ENCODE measurements at regions of chr10 and their contacts with region 1.

Region 1: GRCh38 chr10:95601116-95601719 is 40.0 kb upstream of the SORBS1 start:
- DNase-seq: peak; percentile 80 to 92 (median 82)
- H3K4me3 ChIP-seq: no peak overlapping the region
- H3K27ac ChIP-seq: no peak overlapping the region
- H3K4me1 ChIP-seq: no peaks in the 10 kb centered on the region
- H3K27me3 ChIP-seq: no peaks in the 10 kb centered on the region
- CTCF ChIP-seq: peak; percentile 80 to 98 (median 93)
- POLR2A ChIP-seq: no peak

Region 2: DNA sequence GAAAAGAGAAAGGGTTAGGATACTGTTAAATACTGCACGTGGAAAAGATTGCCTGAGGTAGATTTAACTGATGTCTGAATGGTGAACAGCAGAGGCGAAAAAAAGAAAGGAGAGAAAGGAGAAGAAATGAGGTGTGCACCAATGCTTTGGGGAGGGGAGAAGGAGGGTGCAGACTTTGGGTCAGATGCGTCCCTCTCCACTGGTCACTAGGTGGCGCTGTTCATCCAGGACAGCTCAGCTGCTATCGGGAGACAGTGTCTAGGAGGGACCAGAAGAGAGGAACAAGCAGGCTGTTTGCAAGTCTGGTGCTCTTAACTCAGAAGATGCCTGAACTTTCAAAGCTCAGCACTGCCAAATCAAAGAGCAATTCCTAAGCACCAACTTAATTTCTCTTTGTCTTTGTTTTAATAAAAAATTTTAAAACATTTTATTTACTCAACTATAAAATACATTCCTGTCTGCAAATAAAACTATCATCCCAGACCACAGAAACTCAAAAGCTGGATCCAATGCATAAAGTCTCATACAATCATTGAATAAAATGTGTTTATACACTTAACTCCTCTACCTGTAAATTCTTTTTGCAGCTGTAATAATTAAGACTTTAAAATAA is 226.5 kb before region 1 on chr10:
- intact Hi-C with region 1: loop called (anchors 5 kb)
- DNase-seq: peak; percentile 76 to 89 (median 83)
- H3K4me3 ChIP-seq: no peak overlapping the region
- H3K27ac ChIP-seq: no peak overlapping the region
- H3K4me1 ChIP-seq: no peaks in the 10 kb centered on the region
- H3K27me3 ChIP-seq: no peaks in the 10 kb centered on the region
- CTCF ChIP-seq: peak; percentile 75 to 96 (median 94)
- POLR2A ChIP-seq: no peak

Region 3: GRCh38 chr10:95430231-95430951 is 170.8 kb before region 1 on chr10:
- intact Hi-C with region 1: loop called (anchors 2 kb)
- DNase-seq: peak; percentile 51 to 80 (median 62)
- H3K4me3 ChIP-seq: no peak overlapping the region
- H3K27ac ChIP-seq: no peak overlapping the region
- H3K4me1 ChIP-seq: peaks cover 0 to 12% of the 10 kb centered on the region in 2 donors
- H3K27me3 ChIP-seq: no peaks in the 10 kb centered on the region
- CTCF ChIP-seq: peak; percentile 90 to 98 (median 96)
- POLR2A ChIP-seq: no peak